Activated naive CD8-positive, alpha-beta T cell treated with anti-CD3 and anti-CD28 coated beads, Interleukin-2, amount 10 ng/mL, durations not matched to agents 7 days and 5 days (primary cell): ENCODE measurements at regions of chr16 and their contacts with region 1.

Region 1: GRCh38 chr16:11094072-11094856 is 149.9 kb downstream of the CLEC16A start:
- DNase-seq: peak; percentile 67
- ATAC-seq: peak; percentile 84
- H3K4me3 Mint-ChIP-seq: peak overlapping the region; percentile 61
- H3K27ac Mint-ChIP-seq: peak overlapping the region; percentile 94
- H3K4me1 Mint-ChIP-seq: peaks cover 60% of the 10 kb centered on the region
- H3K27me3 Mint-ChIP-seq: no peaks in the 10 kb centered on the region

Region 2: DNA sequence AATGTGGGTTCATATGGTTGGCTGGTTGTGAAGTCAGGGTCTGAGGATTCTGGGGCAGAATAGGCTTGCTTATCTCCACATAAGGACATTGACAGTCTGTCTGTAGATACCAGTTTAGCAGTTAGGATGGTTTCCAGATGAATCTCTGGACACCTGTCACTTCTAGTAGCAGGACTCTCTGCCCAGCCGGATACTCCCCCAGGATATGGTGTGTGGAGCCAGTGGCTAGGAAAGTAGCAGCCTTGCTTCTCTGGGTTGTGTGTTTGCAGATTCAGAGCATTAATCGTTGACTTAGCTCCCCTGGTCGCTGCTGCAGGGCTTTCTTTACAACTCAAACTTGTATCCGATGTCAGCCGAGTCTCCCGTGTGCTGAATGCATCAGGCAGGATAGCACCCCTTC is 104.7 kb before region 1 on chr16:
- POLR2A ChIA-PET with region 1: no interaction called
- DNase-seq: no peak
- ATAC-seq: no peak
- H3K4me3 Mint-ChIP-seq: peak overlapping the region; percentile 56
- H3K27ac Mint-ChIP-seq: peak overlapping the region; percentile 81
- H3K4me1 Mint-ChIP-seq: peaks cover 82% of the 10 kb centered on the region
- H3K27me3 Mint-ChIP-seq: no peaks in the 10 kb centered on the region

Region 3: GRCh38 chr16:11051879-11052808 is 42.1 kb before region 1 on chr16:
- POLR2A ChIA-PET with region 1: interaction called, 13 read pairs
- DNase-seq: peak; percentile 86
- ATAC-seq: peak; percentile 85
- H3K4me3 Mint-ChIP-seq: peak overlapping the region; percentile 43
- H3K27ac Mint-ChIP-seq: peak overlapping the region; percentile 93
- H3K4me1 Mint-ChIP-seq: peaks cover 78% of the 10 kb centered on the region
- H3K27me3 Mint-ChIP-seq: no peaks in the 10 kb centered on the region

Region 4: GRCh38 chr16:11121914-11122692 is 27.8 kb after region 1 on chr16:
- POLR2A ChIA-PET with region 1: no interaction called
- DNase-seq: no peak
- ATAC-seq: no peak
- H3K4me3 Mint-ChIP-seq: no peak overlapping the region
- H3K27ac Mint-ChIP-seq: peak overlapping the region; percentile 8
- H3K4me1 Mint-ChIP-seq: peaks cover 43% of the 10 kb centered on the region
- H3K27me3 Mint-ChIP-seq: no peaks in the 10 kb centered on the region